Dendritic cell treated with granulocyte-macrophage colony-stimulating factor and Interleukin-4, amounts not matched to agents 40 ng/mL and 50 ng/mL, for 4 days (primary cell): ENCODE measurements at regions of chr6 and their contacts with region 1.

Region 1: DNA sequence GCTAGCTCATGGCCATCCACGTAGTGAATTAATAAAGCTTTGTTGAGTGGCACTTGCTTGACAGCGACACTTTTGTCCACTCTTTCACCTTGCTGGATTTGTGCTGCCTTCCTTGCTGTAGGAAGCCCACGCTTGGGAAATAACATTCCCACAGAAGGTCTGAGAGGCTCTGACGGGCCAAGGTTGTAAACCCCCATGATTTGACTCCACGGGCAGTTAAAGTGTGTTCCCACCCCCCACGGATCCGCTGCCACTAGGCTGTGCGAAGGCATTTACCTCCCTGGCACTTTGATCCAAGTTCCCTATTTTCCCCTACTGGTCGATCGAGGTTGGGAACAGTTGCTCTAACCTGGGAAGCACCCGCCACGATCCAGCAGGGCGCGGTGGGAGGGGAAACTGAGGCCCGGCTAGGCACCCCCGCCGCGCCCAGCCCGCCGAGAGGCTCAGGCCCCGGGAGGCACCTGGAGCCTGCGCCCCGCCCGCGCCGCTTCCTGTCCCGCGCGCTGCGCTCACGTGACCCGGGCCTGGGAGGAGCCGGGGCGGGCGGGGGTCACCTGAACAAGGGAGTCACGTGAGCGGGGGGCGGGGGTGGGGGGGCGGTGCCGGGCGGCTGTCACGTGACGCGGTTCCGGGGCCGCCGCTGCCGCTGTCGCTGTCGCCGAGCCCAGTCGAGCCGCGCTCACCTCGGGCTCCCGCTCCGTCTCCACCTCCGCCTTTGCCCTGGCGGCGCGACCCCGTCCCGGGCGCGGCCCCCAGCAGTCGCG is at the start of gene IGF2R:
- H3K4me3 Mint-ChIP-seq: peak within 1 kb of the TSS; percentile 83
- H3K27ac Mint-ChIP-seq: peak within 1 kb of the TSS; percentile 83
- H3K4me1 Mint-ChIP-seq: peaks cover 51% of the 10 kb centered on the region
- H3K27me3 Mint-ChIP-seq: no peaks in the 10 kb centered on the region

Region 2: GRCh38 chr6:159981403-159982245 is 13.0 kb after region 1 on chr6:
- intact Hi-C with region 1: loop called (anchors 2 kb)
- H3K4me3 Mint-ChIP-seq: peak overlapping the region; percentile 8
- H3K27ac Mint-ChIP-seq: peak overlapping the region; percentile 88
- H3K4me1 Mint-ChIP-seq: peaks cover 95% of the 10 kb centered on the region
- H3K27me3 Mint-ChIP-seq: peaks cover 12% of the 10 kb centered on the region